ENCODE measurements at regions of chr19 and their contacts with region 1.

Region 1: DNA sequence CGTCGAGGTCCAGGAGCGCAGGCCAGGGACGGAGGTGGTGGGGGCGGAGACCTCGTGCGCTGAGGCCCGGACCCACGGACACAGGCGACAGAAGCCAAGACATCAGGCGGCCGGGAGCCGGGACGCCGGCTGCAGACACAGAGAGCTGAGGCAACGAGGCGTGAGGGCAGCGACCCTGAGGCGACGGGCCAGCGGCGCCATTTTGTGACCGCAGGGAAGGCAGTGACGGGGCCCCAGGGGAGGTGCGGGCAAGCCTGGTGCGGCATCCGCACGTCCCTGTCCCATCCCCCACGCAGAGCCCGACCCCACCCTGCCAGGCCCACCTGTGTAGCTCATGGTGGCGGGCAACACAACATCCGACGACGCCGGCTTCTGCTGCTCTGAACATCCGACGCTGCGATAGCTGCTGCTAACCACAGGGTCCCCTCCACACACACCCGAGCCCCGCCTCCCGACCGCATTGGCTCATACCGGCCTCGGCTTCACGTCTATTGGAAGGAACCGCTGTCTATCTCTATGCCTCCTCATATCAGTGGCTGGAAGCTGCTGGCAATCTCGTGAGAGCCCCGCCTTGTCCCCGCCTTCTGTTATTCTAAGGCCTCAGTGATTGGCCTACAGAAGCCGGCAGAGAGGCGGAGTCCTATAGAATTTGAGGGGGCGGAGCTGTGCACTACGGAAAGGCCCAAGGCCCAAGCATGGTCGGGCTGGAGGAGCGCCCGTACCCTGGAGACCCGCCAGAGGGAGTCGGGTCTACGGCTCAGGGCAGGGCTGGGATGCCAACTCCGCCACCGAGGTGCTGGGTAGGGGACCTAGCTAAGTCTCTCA is at the start of gene AKAP8L:
- DNase-seq: peak; percentile 91 to 100 (median 96)

Region 2: DNA sequence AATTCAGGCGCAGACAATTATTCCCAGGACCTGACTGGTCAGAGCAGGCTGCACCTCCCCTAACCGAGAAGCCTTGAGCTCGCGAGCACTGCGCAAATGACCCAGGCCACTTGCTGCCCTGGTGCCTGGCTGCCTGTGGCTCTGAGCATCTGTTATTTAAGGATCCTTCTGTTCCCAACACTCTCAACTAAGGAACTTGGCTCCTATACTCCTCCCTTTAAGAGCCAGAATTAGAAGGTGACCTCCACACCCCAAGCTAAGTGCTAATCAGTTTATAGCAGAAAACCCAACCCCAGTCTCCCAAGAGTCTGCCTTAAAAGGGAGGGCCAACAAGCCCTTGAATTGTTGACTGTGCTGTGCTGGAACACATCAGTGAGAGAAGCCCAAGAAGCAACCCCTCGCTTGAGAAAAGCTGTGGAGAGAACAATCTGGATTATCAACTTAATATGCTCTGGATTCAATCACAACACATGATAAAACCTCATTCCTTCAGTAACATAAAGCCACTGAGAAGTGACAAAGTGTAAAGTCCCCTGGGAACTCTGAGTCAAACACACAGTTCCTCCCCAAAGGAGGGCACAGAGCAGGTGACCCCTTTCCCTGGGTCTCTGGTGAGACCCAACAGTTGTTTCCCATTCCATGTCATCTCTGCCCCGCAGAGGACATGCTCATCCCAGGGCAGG is 14.6 kb before region 1 on chr19:
- intact Hi-C with region 1: no loop called
- DNase-seq: peak in 1 of 10 donors; percentile 61

Region 3: GRCh38 chr19:15432629-15433518 is 14.1 kb after region 1 on chr19:
- intact Hi-C with region 1: loop called (anchors 2 kb)
- DNase-seq: peak; percentile 88 to 99 (median 93)